T-cell (primary cell): ENCODE measurements at regions of chr13 and their contacts with region 1.

Region 1: GRCh38 chr13:112608212-112608611 is 20.3 kb upstream of the TUBGCP3 start:
- DNase-seq: no peak
- ATAC-seq: no peak
- H3K4me3 ChIP-seq: no peak overlapping the region
- H3K4me3 Mint-ChIP-seq: no peak overlapping the region
- H3K27ac ChIP-seq: no peak overlapping the region
- H3K27ac Mint-ChIP-seq: no peak overlapping the region
- H3K4me1 ChIP-seq: peaks cover 2 to 3% of the 10 kb centered on the region in 2 experiments
- H3K4me1 Mint-ChIP-seq: peaks cover 10 to 11% (median 10%) of the 10 kb centered on the region in 3 donors
- H3K27me3 ChIP-seq: peaks cover 0 to 11% of the 10 kb centered on the region in 2 experiments
- H3K27me3 Mint-ChIP-seq: peaks cover 17 to 33% of the 10 kb centered on the region in 2 donors

Region 2: GRCh38 chr13:111505175-111505777 is 1102.9 kb before region 1 on chr13:
- CTCF ChIA-PET with region 1: interaction called in 1 of 2 experiments, 13 read pairs
- POLR2A ChIA-PET with region 1: no interaction called
- DNase-seq: no peak
- ATAC-seq: no peak
- H3K4me3 ChIP-seq: no peak overlapping the region
- H3K4me3 Mint-ChIP-seq: no peak overlapping the region
- H3K27ac ChIP-seq: no peak overlapping the region
- H3K27ac Mint-ChIP-seq: no peak overlapping the region
- H3K4me1 ChIP-seq: no peaks in the 10 kb centered on the region
- H3K4me1 Mint-ChIP-seq: no peaks in the 10 kb centered on the region
- H3K27me3 ChIP-seq: peaks cover 0 to 21% of the 10 kb centered on the region in 2 experiments
- H3K27me3 Mint-ChIP-seq: peaks cover 25 to 31% of the 10 kb centered on the region in 2 donors

Region 3: GRCh38 chr13:112431734-112432133 is 176.5 kb before region 1 on chr13:
- CTCF ChIA-PET with region 1: no interaction called
- POLR2A ChIA-PET with region 1: no interaction called
- DNase-seq: no peak
- ATAC-seq: no peak
- H3K4me3 ChIP-seq: no peak overlapping the region
- H3K4me3 Mint-ChIP-seq: no peak overlapping the region
- H3K27ac ChIP-seq: no peak overlapping the region
- H3K27ac Mint-ChIP-seq: no peak overlapping the region
- H3K4me1 ChIP-seq: no peaks in the 10 kb centered on the region
- H3K4me1 Mint-ChIP-seq: no peaks in the 10 kb centered on the region
- H3K27me3 ChIP-seq: peaks cover 0 to 24% of the 10 kb centered on the region in 2 experiments
- H3K27me3 Mint-ChIP-seq: peaks cover 5 to 8% of the 10 kb centered on the region in 2 donors

Region 4: DNA sequence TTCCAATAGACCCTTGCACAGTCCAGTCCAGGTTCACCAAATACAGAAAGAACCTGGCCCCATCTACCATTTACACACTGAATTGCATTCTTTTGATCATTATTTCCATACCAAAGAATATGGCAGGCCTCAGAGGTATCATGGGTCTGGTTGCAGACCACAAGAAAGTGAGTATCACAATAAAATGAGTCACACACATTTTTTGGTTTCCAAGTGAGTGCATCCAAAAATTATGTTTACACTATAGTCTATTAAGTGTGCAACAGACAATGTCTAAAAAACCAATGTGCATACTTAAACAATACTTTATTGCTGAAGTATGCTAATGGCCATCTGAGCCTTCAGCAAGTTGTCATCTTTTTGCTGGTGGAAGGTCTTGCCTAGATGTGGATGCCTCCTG is 126.8 kb before region 1 on chr13:
- CTCF ChIA-PET with region 1: no interaction called
- POLR2A ChIA-PET with region 1: no interaction called
- DNase-seq: no peak
- ATAC-seq: no peak
- H3K4me3 ChIP-seq: no peak overlapping the region
- H3K4me3 Mint-ChIP-seq: no peak overlapping the region
- H3K27ac ChIP-seq: no peak overlapping the region
- H3K27ac Mint-ChIP-seq: no peak overlapping the region
- H3K4me1 ChIP-seq: no peaks in the 10 kb centered on the region
- H3K4me1 Mint-ChIP-seq: no peaks in the 10 kb centered on the region
- H3K27me3 ChIP-seq: no peaks in the 10 kb centered on the region
- H3K27me3 Mint-ChIP-seq: no peaks in the 10 kb centered on the region